Right ventricle myocardium inferior (tissue), 1 donor: ENCODE measurements at regions of chr20 and their contacts with region 1.

Region 1: DNA sequence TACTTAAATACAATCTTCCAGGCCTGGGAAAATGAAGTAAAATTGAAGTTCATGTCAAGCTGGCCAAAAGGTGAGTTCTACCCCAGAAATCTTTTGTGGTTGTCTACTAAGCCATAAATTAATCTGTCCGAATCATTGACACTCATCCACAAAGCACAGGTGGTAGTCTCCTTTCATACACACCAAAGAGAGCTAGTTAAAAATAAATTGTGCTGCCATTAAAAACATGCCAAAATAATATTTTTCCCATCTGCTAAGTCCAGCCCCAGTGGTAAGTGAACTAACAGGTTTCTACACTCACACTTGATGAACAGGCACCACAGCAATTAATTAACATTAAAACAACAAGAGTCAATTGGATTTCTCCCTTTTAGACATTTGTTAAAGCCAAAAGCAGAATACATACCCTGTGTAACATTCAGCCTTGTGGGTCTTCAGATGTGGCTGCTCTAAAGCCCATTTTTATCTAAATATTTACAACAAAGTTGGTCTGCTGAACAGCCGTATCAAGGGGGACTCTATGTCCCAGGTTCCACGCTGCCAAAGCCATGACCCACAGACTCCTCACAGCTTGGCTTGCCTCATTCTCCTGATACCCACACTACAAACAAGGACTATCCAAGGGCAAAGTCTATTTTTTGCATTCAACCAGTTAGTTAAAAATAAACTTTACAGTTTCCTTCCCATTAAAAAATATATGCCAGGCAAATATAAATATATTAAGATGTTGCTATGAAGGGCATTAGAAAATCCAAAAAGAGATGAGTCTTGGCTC is 490.4 kb downstream of the BMP2 start:
- DNase-seq: peak; percentile 50
- ATAC-seq: peak; percentile 97

Region 2: GRCh38 chr20:7123457-7123856 is 134.4 kb before region 1 on chr20:
- intact Hi-C with region 1: loop called (anchors 10 kb)
- DNase-seq: no peak
- ATAC-seq: peak; percentile 94

Region 3: GRCh38 chr20:7214081-7214740 is 43.7 kb before region 1 on chr20:
- intact Hi-C with region 1: loop called (anchors 5 kb)
- DNase-seq: no peak
- ATAC-seq: no peak